GM12878 (cell line): ENCODE measurements at regions of chr13 and their contacts with region 1.

Region 1: DNA sequence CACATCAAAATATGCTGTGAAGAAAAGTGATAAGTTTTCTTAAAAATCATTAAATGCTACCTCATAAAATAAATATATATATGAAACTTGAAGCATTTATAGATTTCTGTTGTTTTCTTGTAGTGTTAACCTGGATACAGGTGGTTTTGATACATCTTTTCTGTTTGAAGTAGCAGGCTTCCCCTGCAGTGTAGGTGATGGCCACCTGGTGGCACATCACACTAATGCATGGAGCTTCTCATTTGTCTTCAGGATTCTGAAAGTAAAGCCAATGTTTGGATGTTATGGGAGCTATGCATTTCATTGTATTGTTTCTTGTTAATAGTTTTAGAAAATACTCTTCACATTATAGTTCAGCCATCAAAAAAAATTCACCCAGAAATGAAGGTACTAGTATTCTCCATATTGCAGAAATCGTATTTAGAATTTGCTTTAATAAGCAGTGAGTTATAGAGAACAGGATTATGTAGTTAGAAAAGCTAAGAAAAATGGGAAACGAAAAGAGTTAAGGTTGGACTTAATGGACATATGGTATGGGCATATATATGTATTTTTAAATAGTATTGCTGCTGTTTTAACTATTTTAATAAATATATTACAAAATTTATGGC is 18.7 kb downstream of the GPR180 start:
- DNase-seq: no peak
- ATAC-seq: peak; percentile 90
- H3K4me3 ChIP-seq: no peak overlapping the region
- H3K27ac ChIP-seq: no peak overlapping the region
- H3K4me1 ChIP-seq: no peaks in the 10 kb centered on the region
- H3K27me3 ChIP-seq: no peaks in the 10 kb centered on the region
- CTCF ChIP-seq: peak; percentile 73 to 79 (median 73)
- EP300 ChIP-seq: no peak
- POLR2A ChIP-seq: no peak
- RAD21 ChIP-seq: peak; percentile 79

Region 2: GRCh38 chr13:94435604-94436226 is 184.7 kb before region 1 on chr13:
- CTCF ChIA-PET with region 1: interaction called, 288 read pairs
- POLR2A ChIA-PET with region 1: interaction called, 9 read pairs
- RAD21 ChIA-PET with region 1: interaction called, 111 read pairs
- SMC1A ChIA-PET with region 1: interaction called, 153 read pairs
- in situ Hi-C with region 1: no loop called
- intact Hi-C with region 1: loop called (anchors 1 kb)
- DNase-seq: no peak
- ATAC-seq: peak; percentile 83
- H3K4me3 ChIP-seq: no peak overlapping the region
- H3K27ac ChIP-seq: no peak overlapping the region
- H3K4me1 ChIP-seq: no peaks in the 10 kb centered on the region
- H3K27me3 ChIP-seq: no peaks in the 10 kb centered on the region; a peak in 1 of 4 replicates
- CTCF ChIP-seq: peak; percentile 44 to 62 (median 49); a peak in 4 of 6 replicates
- EP300 ChIP-seq: no peak
- POLR2A ChIP-seq: no peak
- RAD21 ChIP-seq: peak; percentile 79

Region 3: DNA sequence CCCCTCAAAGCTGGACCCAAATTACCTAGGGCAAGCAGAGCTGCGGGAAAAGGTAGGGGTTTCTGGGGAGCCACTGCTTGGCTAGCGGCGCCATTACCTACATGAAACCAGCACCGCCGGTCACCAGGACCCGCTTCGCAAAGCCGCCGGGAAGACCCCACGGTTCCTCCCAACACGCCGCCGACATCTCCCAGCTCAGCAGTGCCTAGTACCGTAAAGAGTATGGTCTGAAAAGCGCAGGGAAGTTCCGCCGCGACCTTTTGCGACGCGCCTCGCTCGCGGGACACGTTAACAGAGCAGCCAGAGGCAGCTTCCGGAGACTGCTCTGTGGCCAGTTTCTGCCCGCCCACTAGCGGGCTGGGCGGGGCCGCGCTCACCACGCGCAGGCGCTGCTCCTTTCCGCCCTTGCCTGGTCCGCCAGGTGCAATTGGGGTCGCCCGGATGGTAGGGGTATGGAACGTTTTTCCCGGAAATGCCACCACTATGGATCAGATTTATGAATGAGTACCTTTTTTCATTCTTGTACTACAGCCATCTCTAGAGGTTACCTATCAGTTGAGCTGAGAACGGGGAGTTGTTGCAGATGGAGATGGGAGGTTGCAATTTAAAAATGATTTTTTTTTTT is 24.3 kb before region 1 on chr13 and contains the start of gene TGDS:
- CTCF ChIA-PET with region 1: interaction called, 102 read pairs
- POLR2A ChIA-PET with region 1: no interaction called
- RAD21 ChIA-PET with region 1: interaction called, 10 read pairs
- SMC1A ChIA-PET with region 1: interaction called, 14 read pairs
- in situ Hi-C with region 1: no loop called
- intact Hi-C with region 1: no loop called
- DNase-seq: peak; percentile 79
- ATAC-seq: peak; percentile 96
- H3K4me3 ChIP-seq: peak within 1 kb of the TSS; percentile 74
- H3K27ac ChIP-seq: peak within 1 kb of the TSS; percentile 91
- H3K4me1 ChIP-seq: peaks cover 3% of the 10 kb centered on the region; the same call in 1 of the 2 replicates
- H3K27me3 ChIP-seq: no peaks in the 10 kb centered on the region
- CTCF ChIP-seq: no peak
- EP300 ChIP-seq: no peak
- POLR2A ChIP-seq: peak; percentile 97
- RAD21 ChIP-seq: no peak
- polyA plus RNA-seq, gene TGDS: 28.1 to 42.7 TPM

Region 4: DNA sequence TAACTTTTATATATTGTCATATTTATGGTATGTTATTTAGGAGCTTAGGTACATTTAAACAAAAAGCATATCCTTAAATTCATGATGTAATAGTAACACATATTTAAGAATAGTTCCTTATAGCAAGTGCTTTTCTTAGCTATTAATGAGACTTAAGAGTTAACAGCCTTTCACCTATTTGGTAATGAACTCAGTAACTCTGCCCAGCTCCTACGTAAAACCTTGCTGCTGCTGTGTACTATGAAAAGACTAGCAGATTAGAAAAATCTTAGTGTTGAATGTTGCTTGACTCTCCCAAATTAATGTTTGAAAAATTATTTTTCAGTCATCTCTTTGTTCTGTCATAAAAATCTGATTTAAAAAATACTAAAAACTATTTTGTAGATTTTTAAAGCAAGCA is 11.8 kb before region 1 on chr13:
- CTCF ChIA-PET with region 1: interaction called, 102 read pairs
- POLR2A ChIA-PET with region 1: no interaction called
- RAD21 ChIA-PET with region 1: interaction called, 36 read pairs
- SMC1A ChIA-PET with region 1: interaction called, 25 read pairs
- in situ Hi-C with region 1: no loop called
- intact Hi-C with region 1: no loop called
- DNase-seq: no peak
- ATAC-seq: no peak
- H3K4me3 ChIP-seq: no peak overlapping the region
- H3K27ac ChIP-seq: no peak overlapping the region
- H3K4me1 ChIP-seq: no peaks in the 10 kb centered on the region
- H3K27me3 ChIP-seq: no peaks in the 10 kb centered on the region
- CTCF ChIP-seq: no peak
- EP300 ChIP-seq: no peak
- POLR2A ChIP-seq: no peak
- RAD21 ChIP-seq: no peak

Region 5: DNA sequence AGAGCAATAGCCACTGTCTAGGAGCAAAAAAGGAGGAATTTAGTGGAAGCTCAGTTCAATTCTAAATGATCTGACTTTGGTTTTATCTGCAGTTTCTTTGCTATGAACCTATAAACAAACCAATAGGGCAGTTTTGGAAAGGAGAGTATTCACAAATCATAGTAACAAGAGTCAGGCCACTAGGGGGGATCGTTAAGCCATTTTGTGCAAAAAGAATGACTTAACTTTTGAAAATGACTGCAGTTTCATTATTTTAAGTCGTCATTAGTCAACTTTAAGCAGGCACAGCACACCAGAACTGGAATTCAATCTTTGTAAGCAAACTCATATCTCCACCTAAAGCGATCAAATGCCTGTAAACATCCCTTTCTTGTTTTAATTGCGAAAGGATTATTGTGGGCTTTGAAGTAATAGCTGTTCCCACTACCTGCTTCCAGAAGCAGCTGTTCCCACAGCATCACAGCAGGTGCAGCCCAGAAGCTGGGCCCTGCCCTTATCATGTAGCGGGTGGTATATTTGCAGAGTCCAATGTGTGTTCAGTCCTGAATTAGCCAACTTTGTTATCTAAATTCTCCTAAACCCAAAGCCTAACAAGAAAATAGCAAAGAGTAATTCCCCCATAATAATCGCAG is 40.4 kb after region 1 on chr13:
- CTCF ChIA-PET with region 1: interaction called, 12 read pairs
- POLR2A ChIA-PET with region 1: no interaction called
- RAD21 ChIA-PET with region 1: interaction called, 5 read pairs
- SMC1A ChIA-PET with region 1: no interaction called
- in situ Hi-C with region 1: no loop called
- intact Hi-C with region 1: no loop called
- DNase-seq: no peak
- ATAC-seq: peak; percentile 47
- H3K4me3 ChIP-seq: no peak overlapping the region
- H3K27ac ChIP-seq: no peak overlapping the region
- H3K4me1 ChIP-seq: peaks cover 9% of the 10 kb centered on the region
- H3K27me3 ChIP-seq: 0 out of 4 replicates have a peak, but pooled peaks cover 0 to 2% of the 10 kb centered on the region in 2 experiments
- CTCF ChIP-seq: peak in 2 of 3 experiments; percentile 27 to 29; a peak in 3 of 6 replicates
- EP300 ChIP-seq: no peak
- POLR2A ChIP-seq: no peak
- RAD21 ChIP-seq: peak; percentile 35